Heart right ventricle (tissue), 16 donors: ENCODE measurements at regions of chr17 and their contacts with region 1.

Region 1: DNA sequence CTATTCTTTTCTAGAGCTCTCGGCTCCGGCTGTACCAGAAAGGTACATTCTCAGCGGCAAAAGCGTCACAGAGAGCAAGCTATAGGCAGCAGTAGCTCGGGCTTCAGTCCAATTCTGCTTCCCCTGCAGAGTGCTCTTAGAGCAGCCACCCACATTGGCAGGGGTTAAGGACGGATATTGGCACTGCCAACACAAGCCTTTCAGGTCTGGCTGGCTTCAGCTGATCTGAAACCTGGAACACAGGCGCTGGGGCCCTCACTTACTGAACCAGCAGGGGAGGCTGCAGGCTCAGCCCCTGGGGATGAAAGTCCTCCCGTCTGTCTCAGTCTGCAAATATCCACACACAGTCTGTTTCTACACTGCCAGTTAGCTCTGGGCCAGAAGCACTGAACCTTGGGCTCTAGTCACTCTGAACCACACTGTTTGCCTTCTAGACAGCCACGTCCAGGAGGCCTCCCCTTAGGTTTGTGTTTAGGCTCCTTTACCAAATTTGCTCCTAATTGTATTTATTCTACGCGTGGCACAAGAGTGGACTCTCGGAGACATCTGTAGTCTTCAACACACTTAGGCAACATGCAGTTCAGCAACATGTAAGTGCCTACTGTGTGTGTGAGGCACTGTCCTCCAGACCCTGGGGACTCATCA is 40.1 kb downstream of the HIC1 start:
- DNase-seq: peak; percentile 70 to 73
- ATAC-seq: peak; percentile 80 to 93 (median 88)
- H3K4me3 ChIP-seq: no peak overlapping the region
- H3K27ac ChIP-seq: peak overlapping the region in 9 of 10 donors; percentile 17 to 65 (median 37)
- H3K4me1 ChIP-seq: peaks cover 5 to 51% (median 26%) of the 10 kb centered on the region in 9 donors
- H3K27me3 ChIP-seq: no peaks in the 10 kb centered on the region
- CTCF ChIP-seq: peak; percentile 43 to 83 (median 75)

Region 2: GRCh38 chr17:2179615-2180295 is 84.7 kb after region 1 on chr17:
- intact Hi-C with region 1: no loop called
- DNase-seq: peak; percentile 60 to 97
- ATAC-seq: peak; percentile 64 to 80 (median 77)
- H3K4me3 ChIP-seq: no peak overlapping the region
- H3K27ac ChIP-seq: peak overlapping the region; percentile 79 to 96 (median 88)
- H3K4me1 ChIP-seq: peaks cover 63 to 86% (median 82%) of the 10 kb centered on the region in 9 donors
- H3K27me3 ChIP-seq: no peaks in the 10 kb centered on the region
- CTCF ChIP-seq: no peak

Region 3: GRCh38 chr17:2222901-2223616 is 128.0 kb after region 1 on chr17:
- intact Hi-C with region 1: loop called in 1 of 10 experiments (anchors 5 kb)
- DNase-seq: peak; percentile 36 to 69
- ATAC-seq: peak; percentile 86 to 98 (median 92)
- H3K4me3 ChIP-seq: no peak overlapping the region
- H3K27ac ChIP-seq: peak overlapping the region in 9 of 10 donors; percentile 31 to 85 (median 66)
- H3K4me1 ChIP-seq: peaks cover 3 to 33% (median 18%) of the 10 kb centered on the region in 9 donors
- H3K27me3 ChIP-seq: no peaks in the 10 kb centered on the region
- CTCF ChIP-seq: peak in 2 of 9 donors; percentile 23 to 34

Region 4: DNA sequence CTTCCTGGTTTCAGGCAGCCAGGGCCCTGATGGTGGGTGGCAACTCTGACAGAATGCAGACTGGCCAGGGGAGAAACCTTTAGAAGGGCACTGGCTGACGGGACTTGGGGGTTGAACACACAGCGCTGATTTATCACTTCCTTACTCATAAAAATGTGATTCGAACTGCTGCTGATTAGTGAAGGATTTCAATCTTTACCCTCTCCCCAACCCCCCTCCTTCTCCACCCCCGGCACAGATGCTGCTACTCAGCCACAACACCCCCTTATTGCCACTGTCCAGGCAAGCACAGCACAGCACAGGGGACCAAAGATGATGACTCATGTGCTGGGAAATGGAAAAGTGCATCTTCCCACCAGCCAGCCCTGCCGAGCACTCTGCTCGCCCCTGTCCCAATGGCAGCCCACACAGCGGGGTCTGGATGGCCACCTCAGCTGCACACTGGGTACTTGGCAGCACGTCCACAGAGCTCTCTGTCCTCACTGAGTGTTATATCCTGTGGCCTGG is 138.5 kb after region 1 on chr17:
- intact Hi-C with region 1: loop called in 5 of 10 experiments (anchors 2 to 10 kb)
- DNase-seq: peak; percentile 22 to 33
- ATAC-seq: peak in 5 of 8 donors; percentile 27 to 63 (median 35)
- H3K4me3 ChIP-seq: no peak overlapping the region
- H3K27ac ChIP-seq: peak overlapping the region in 9 of 10 donors; percentile 34 to 86 (median 70)
- H3K4me1 ChIP-seq: peaks cover 13 to 89% (median 68%) of the 10 kb centered on the region in 9 donors
- H3K27me3 ChIP-seq: no peaks in the 10 kb centered on the region
- CTCF ChIP-seq: no peak

Region 5: DNA sequence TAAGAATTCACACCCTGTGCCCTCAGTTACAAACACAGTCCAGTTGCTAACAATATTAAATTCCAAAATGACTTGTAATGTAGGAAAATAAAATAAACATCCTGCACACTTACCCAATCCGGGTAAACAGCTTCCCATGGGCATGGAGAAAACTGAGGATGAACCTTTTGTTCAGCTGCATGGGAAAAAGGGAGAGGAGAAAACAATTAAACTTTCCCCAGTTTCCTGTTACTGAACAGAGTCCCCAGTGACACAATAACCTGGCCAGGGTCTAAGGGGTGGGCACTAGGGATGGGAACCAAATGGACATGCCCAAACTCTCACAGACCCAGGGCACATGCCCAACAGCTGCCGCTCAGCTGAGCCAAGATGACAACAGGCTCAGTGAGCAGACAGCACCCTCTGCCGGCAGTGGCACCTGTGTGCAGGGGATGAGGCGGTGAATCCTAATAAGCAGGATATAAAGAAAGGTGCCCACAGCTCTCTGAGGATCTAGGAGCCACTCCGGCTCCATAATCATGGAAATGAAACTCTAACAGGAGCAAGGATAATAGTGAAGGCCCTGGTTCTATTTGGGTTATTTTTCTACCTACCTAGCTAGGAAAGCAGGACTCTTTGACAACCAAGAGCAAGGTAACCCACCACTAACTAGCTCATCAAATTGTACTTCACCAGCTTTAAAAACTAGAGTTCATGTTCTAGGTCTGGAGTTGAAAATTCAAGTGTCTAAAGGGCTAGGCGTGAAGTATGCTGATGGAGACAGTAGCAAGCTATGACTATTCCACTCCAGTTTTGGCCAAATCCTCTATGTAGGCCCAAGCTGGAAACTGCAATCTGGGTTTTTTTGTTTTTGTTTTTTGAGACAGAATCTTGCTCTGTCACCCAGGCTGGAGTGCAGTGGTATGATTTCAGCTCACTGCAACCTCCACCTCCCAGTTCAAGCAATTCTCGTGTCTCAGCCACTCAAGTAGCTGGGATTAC is 149.8 kb after region 1 on chr17:
- intact Hi-C with region 1: loop called in 5 of 10 experiments (anchors 2 to 10 kb)
- DNase-seq: peak; percentile 86 to 89
- ATAC-seq: peak; percentile 87 to 94 (median 92)
- H3K4me3 ChIP-seq: no peak overlapping the region
- H3K27ac ChIP-seq: peak overlapping the region in 9 of 10 donors; percentile 20 to 76 (median 61)
- H3K4me1 ChIP-seq: peaks cover 0 to 41% (median 14%) of the 10 kb centered on the region in 9 donors
- H3K27me3 ChIP-seq: no peaks in the 10 kb centered on the region
- CTCF ChIP-seq: peak; percentile 97 to 99 (median 99)